CD14-positive monocyte (primary cell): ENCODE measurements at regions of chr17 and their contacts with region 1.

Region 1: GRCh38 chr17:74528491-74529199 is 2.6 kb downstream of the CD300LB start:
- DNase-seq: peak; percentile 97 to 100 (median 100)
- H3K4me3 ChIP-seq: peak overlapping the region; percentile 42 to 94 (median 70)
- H3K4me3 Mint-ChIP-seq: peak overlapping the region; percentile 84 to 94
- H3K27ac ChIP-seq: peak overlapping the region; percentile 93 to 98
- H3K27ac Mint-ChIP-seq: peak overlapping the region; percentile 97 to 100 (median 98)
- H3K4me1 ChIP-seq: peaks cover 96 to 98% of the 10 kb centered on the region in 2 donors
- H3K4me1 Mint-ChIP-seq: peaks cover 94% of the 10 kb centered on the region
- H3K27me3 ChIP-seq: no peaks in the 10 kb centered on the region
- H3K27me3 Mint-ChIP-seq: peaks cover 0 to 3% (median 0%) of the 10 kb centered on the region in 3 donors
- CTCF ChIP-seq: no peak

Region 2: DNA sequence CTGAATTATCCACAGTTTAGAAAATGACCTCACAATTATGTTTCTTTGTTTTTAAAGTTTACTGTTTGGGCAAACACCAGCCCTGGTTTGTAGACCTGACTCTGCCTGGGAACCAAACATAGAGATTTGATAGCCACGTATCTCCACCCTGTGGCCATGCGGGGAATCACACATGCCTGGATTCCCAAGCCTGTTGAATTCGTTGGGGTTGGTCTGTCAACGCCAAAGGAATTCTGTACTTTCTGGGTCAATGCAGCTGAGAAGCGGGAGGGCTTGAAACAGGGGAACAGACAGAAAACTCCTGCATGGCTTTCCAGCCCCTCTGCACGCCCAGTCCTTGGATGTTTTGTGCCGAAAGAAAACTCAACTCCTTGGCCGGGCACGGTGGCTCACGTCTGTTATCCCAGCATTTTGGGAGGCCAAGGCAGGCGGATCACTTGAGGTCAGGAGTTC is 35.2 kb before region 1 on chr17:
- intact Hi-C with region 1: loop called in 1 of 2 experiments (anchors 5 kb)
- DNase-seq: peak; percentile 67 to 79 (median 79)
- H3K4me3 ChIP-seq: no peak overlapping the region
- H3K4me3 Mint-ChIP-seq: no peak overlapping the region
- H3K27ac ChIP-seq: no peak overlapping the region
- H3K27ac Mint-ChIP-seq: peak overlapping the region in 1 of 7 donors; percentile 42
- H3K4me1 ChIP-seq: peaks cover 28 to 44% of the 10 kb centered on the region in 2 donors
- H3K4me1 Mint-ChIP-seq: peaks cover 41% of the 10 kb centered on the region
- H3K27me3 ChIP-seq: no peaks in the 10 kb centered on the region
- H3K27me3 Mint-ChIP-seq: peaks cover 0 to 5% (median 1%) of the 10 kb centered on the region in 3 donors
- CTCF ChIP-seq: peak; percentile 91

Region 3: DNA sequence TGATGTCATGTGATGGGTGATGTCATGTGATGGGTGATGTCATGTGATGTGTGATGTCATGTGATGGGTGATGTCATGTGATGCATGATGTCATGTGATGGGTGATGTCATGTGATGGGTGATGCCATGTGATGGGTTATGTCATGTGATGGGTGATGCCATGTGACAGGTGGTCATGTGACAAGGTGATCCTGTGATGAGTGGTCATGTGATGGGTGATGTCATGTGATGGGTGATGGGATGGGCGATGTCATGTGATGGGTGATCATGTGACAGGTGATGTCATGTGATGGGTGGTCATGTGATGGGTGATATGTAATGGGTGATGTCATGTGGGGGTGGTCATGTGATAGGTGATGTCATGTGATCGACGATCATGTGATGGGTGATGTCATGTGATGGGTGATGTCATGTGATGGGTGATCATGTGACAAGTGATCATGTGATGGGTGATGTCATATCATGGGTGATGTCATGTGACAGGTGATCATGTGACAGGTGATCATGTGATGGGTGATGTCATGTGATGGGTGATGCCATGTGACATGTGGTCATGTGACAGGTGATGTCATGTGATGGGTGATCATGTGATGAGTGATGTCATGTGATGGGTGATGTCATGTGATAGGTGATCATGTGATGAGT is 14.5 kb before region 1 on chr17:
- intact Hi-C with region 1: loop called (anchors 2 kb)
- DNase-seq: peak; percentile 39 to 93 (median 84)
- H3K4me3 ChIP-seq: no peak overlapping the region
- H3K4me3 Mint-ChIP-seq: peak overlapping the region in 1 of 2 donors; percentile 0
- H3K27ac ChIP-seq: peak overlapping the region; percentile 77 to 97
- H3K27ac Mint-ChIP-seq: peak overlapping the region; percentile 97 to 100 (median 99)
- H3K4me1 ChIP-seq: peaks cover 21 to 37% of the 10 kb centered on the region in 2 donors
- H3K4me1 Mint-ChIP-seq: peaks cover 42% of the 10 kb centered on the region
- H3K27me3 ChIP-seq: no peaks in the 10 kb centered on the region
- H3K27me3 Mint-ChIP-seq: peaks cover 0 to 20% (median 9%) of the 10 kb centered on the region in 3 donors
- CTCF ChIP-seq: no peak

Region 4: GRCh38 chr17:74623693-74624093 is 95.0 kb after region 1 on chr17 and contains the start of gene CD300E:
- intact Hi-C with region 1: loop called in 1 of 2 experiments (anchors 5 kb)
- DNase-seq: peak; percentile 83 to 96 (median 95)
- H3K4me3 ChIP-seq: peak within 1 kb of the TSS; percentile 90 to 99 (median 98)
- H3K4me3 Mint-ChIP-seq: peak within 1 kb of the TSS; percentile 93 to 100
- H3K27ac ChIP-seq: peak within 1 kb of the TSS; percentile 91 to 94
- H3K27ac Mint-ChIP-seq: peak within 1 kb of the TSS; percentile 93 to 99 (median 97)
- H3K4me1 ChIP-seq: peaks cover 76 to 85% of the 10 kb centered on the region in 2 donors
- H3K4me1 Mint-ChIP-seq: peaks cover 87% of the 10 kb centered on the region
- H3K27me3 ChIP-seq: no peaks in the 10 kb centered on the region
- H3K27me3 Mint-ChIP-seq: peaks cover 3 to 4% (median 3%) of the 10 kb centered on the region in 3 donors
- CTCF ChIP-seq: no peak
- polyA plus RNA-seq, gene CD300E: 65.0 to 228 (median 122) TPM

Region 5: DNA sequence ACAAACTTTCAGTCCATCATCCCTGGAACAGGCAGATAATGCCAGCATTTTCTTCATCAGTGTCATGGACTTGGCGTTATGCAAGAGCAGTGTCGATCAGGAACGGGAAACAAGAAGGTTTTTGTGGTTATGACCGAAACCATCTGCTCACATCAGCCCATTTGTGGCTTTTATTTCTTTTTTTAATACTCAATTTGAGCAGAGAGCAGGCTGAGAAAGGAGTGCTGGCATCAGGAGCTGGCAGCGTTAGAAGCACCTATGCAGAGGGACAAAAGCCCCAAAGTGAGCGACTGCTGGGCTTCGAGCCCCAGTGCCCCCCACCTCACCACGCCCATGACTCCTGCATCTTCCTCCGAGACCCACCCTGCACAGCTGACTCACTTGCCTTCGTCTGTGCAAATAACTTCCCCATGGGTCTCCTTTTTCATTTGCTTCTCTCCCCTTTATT is 111.1 kb after region 1 on chr17:
- intact Hi-C with region 1: loop called in 1 of 2 experiments (anchors 5 kb)
- DNase-seq: peak; percentile 89 to 94 (median 90)
- H3K4me3 ChIP-seq: peak overlapping the region in 1 of 3 experiments; percentile 19
- H3K4me3 Mint-ChIP-seq: peak overlapping the region; percentile 38 to 39
- H3K27ac ChIP-seq: peak overlapping the region; percentile 99 to 100
- H3K27ac Mint-ChIP-seq: peak overlapping the region; percentile 99 to 100 (median 100)
- H3K4me1 ChIP-seq: peaks cover 96 to 100% of the 10 kb centered on the region in 2 donors
- H3K4me1 Mint-ChIP-seq: peaks cover 93% of the 10 kb centered on the region
- H3K27me3 ChIP-seq: no peaks in the 10 kb centered on the region
- H3K27me3 Mint-ChIP-seq: peaks cover 0 to 4% (median 1%) of the 10 kb centered on the region in 3 donors
- CTCF ChIP-seq: no peak